ENCODE measurements at regions of chr17 and their contacts with region 1.

Region 1: DNA sequence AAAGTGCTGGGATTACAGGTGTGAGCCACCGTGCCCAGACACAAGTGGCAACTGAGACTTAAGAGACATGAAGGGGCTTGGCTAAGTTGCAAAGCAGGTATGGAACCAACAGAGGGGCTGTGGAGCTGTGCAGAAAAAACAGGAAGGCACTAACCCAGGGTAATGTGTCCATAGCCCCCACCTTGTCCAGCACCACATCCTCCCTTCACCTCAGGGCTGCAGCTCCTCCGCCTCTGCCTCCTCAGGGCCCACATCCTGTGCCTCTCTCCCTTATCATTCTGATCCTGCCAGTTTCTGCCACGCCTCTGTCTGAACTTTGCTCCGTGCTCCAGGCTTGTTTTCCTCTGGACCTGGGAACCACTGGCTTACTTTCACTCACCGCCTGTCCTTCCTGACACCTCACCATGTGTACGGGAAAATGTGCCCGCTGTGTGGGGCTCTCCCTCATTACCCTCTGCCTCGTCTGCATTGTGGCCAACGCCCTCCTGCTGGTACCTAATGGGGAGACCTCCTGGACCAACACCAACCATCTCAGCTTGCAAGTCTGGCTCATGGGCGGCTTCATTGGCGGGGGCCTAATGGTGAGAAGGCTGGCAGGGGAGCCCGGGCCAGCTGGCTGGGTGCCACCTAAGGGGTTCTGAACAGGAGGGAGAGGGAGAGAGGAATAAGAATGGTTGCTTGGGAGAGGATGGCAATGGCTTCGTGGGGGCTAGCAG is at the start of gene TM4SF5:
- H3K4me3 Mint-ChIP-seq: no peak within 1 kb of the TSS
- H3K27ac Mint-ChIP-seq: peak within 1 kb of the TSS; percentile 86
- H3K4me1 Mint-ChIP-seq: peaks cover 52% of the 10 kb centered on the region
- H3K27me3 Mint-ChIP-seq: peaks cover 6% of the 10 kb centered on the region

Region 2: GRCh38 chr17:4709794-4710692 is 61.6 kb before region 1 on chr17 and contains the start of gene ARRB2:
- intact Hi-C with region 1: loop called (anchors 2 kb)
- H3K4me3 Mint-ChIP-seq: peak within 1 kb of the TSS; percentile 86
- H3K27ac Mint-ChIP-seq: peak within 1 kb of the TSS; percentile 95
- H3K4me1 Mint-ChIP-seq: peaks cover 49% of the 10 kb centered on the region
- H3K27me3 Mint-ChIP-seq: no peaks in the 10 kb centered on the region

Region 3: GRCh38 chr17:4759776-4760236 is 11.9 kb before region 1 on chr17:
- intact Hi-C with region 1: loop called (anchors 1 kb)
- H3K4me3 Mint-ChIP-seq: no peak overlapping the region
- H3K27ac Mint-ChIP-seq: peak overlapping the region; percentile 82
- H3K4me1 Mint-ChIP-seq: peaks cover 39% of the 10 kb centered on the region
- H3K27me3 Mint-ChIP-seq: peaks cover 14% of the 10 kb centered on the region

Region 4: DNA sequence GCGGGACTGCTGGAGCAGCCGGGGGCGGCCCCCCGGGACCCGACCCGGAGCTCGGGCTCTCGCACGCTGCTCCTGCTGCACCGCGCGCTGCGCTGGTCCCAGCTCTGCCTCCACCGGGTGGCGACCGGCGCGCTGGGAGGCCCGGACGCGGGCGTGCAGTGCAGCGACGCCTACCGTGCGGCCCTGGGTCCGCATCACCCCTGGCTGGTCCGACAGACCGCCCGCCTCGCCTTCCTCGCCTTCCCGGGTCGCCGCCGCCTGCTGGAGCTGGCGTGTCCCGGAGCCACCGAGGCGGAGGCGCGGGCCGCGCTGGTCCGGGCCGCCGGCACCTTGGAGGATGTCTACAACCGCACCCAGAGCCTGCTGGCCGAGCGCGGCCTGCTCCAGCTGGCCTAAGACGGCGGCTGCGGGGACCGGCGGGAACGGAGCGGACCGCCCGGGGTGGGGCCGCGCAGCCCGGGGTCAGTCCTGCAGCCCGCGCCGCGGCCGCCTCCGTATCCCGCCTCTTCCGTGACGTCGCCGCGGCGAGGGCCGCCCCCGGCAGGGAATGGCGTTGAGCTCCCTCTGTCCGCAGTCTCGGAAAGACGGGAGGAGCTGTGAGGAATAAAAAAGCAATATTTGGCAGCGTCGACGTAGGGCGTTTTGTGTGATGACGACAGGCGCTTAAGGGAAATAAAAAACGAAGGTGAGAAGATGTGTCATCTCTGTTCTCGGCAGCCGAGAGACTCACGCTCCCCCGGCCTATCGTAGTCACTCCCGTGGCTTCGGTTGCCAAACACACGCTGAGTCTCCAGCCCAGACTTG is 18.4 kb after region 1 on chr17:
- intact Hi-C with region 1: loop called (anchors 2 kb)
- H3K4me3 Mint-ChIP-seq: peak overlapping the region; percentile 84
- H3K27ac Mint-ChIP-seq: peak overlapping the region; percentile 94
- H3K4me1 Mint-ChIP-seq: peaks cover 57% of the 10 kb centered on the region
- H3K27me3 Mint-ChIP-seq: peaks cover 42% of the 10 kb centered on the region

Measured in dendritic cell treated with granulocyte-macrophage colony-stimulating factor and Interleukin-4, amounts not matched to agents 40 ng/mL and 50 ng/mL, for 4 days (primary cell).